GM12878 (cell line): ENCODE measurements at regions of chr6 and their contacts with region 1.

Region 1: GRCh38 chr6:32692019-32692418 is 25.6 kb upstream of the HLA-DQB1 start:
- DNase-seq: peak; percentile 50
- ATAC-seq: peak; percentile 77
- H3K4me3 ChIP-seq: no peak overlapping the region
- H3K27ac ChIP-seq: no peak overlapping the region
- H3K4me1 ChIP-seq: peaks cover 21% of the 10 kb centered on the region
- H3K27me3 ChIP-seq: no peaks in the 10 kb centered on the region; a peak in 1 of 4 replicates
- CTCF ChIP-seq: peak; percentile 68 to 84 (median 80)
- EP300 ChIP-seq: no peak
- POLR2A ChIP-seq: no peak
- RAD21 ChIP-seq: peak; percentile 97

Region 2: GRCh38 chr6:32424589-32425300 is 267.3 kb before region 1 on chr6:
- CTCF ChIA-PET with region 1: interaction called, 160 read pairs
- POLR2A ChIA-PET with region 1: no interaction called
- RAD21 ChIA-PET with region 1: interaction called, 119 read pairs
- SMC1A ChIA-PET with region 1: interaction called, 13 read pairs
- in situ Hi-C with region 1: loop called (anchors 5 kb)
- intact Hi-C with region 1: no loop called
- DNase-seq: no peak
- ATAC-seq: no peak
- H3K4me3 ChIP-seq: no peak overlapping the region
- H3K27ac ChIP-seq: no peak overlapping the region
- H3K4me1 ChIP-seq: no peaks in the 10 kb centered on the region
- H3K27me3 ChIP-seq: peaks cover 1 to 3% of the 10 kb centered on the region in 2 experiments; a peak in 2 of 4 replicates
- CTCF ChIP-seq: no peak
- EP300 ChIP-seq: no peak
- POLR2A ChIP-seq: no peak
- RAD21 ChIP-seq: no peak

Region 3: GRCh38 chr6:32439602-32440214 is 252.3 kb before region 1 on chr6 and contains the start of gene HLA-DRA:
- CTCF ChIA-PET with region 1: interaction called, 160 read pairs
- POLR2A ChIA-PET with region 1: interaction called, 27 read pairs
- RAD21 ChIA-PET with region 1: interaction called, 119 read pairs
- SMC1A ChIA-PET with region 1: interaction called, 154 read pairs
- in situ Hi-C with region 1: no loop called
- intact Hi-C with region 1: loop called (anchors 2 kb)
- DNase-seq: peak; percentile 99
- ATAC-seq: peak; percentile 71
- H3K4me3 ChIP-seq: peak within 1 kb of the TSS; percentile 99
- H3K27ac ChIP-seq: peak within 1 kb of the TSS; percentile 100
- H3K4me1 ChIP-seq: peaks cover 29% of the 10 kb centered on the region
- H3K27me3 ChIP-seq: no peaks in the 10 kb centered on the region
- CTCF ChIP-seq: no peak
- EP300 ChIP-seq: peak; percentile 66 to 68; a peak in 3 of 4 replicates
- POLR2A ChIP-seq: peak; percentile 95
- RAD21 ChIP-seq: no peak
- polyA plus RNA-seq, gene HLA-DRA: 4,131 to 6,024 TPM

Region 4: DNA sequence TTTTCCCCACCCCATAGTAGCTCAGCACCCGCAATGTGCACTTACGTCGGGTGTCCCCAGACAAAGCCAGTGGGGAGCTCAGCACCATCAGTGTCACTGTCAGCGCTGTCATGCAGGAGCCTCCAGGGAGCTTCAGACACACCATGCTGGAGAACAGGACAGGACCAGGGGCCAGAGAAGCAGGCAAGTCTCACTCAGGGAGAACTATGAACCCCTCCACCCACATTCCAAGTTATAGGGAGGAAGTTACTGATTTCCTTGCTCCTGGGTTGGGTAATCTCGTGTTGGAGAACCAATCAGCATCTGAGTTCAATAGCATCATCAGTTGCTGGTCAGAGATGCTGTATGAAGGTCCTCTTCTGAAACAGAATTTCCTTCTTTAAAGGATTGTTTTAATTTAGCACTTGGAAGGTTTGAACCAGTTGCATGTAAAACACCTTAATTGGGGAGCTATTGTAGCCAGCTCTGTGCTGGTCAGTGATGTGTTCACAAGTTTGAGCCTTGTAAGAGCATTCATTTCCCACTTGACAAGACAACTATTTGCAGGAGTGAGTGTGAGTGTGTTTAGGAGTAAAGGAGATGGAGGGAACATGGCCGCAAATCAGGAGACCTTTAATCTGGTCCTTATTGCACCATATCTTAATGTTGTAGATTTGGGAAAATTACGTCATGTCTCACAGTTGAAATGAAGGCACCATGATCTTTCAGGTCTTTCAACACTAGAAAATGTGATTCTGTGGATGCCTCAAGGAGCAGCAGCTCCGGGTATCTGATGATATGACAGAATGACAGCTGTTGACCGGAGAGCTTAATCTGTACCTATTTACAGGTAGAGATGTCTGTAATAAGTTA is 102.2 kb before region 1 on chr6 and contains the start of gene HLA-DRB1:
- CTCF ChIA-PET with region 1: interaction called, 5 read pairs
- POLR2A ChIA-PET with region 1: interaction called, 12 read pairs
- RAD21 ChIA-PET with region 1: interaction called, 4 read pairs
- SMC1A ChIA-PET with region 1: interaction called, 6 read pairs
- in situ Hi-C with region 1: no loop called
- intact Hi-C with region 1: no loop called
- DNase-seq: peak; percentile 91
- ATAC-seq: peak; percentile 89
- H3K4me3 ChIP-seq: peak within 1 kb of the TSS; percentile 72
- H3K27ac ChIP-seq: peak within 1 kb of the TSS; percentile 93
- H3K4me1 ChIP-seq: peaks cover 4% of the 10 kb centered on the region; the same call in 1 of the 2 replicates
- H3K27me3 ChIP-seq: no peaks in the 10 kb centered on the region
- CTCF ChIP-seq: no peak
- EP300 ChIP-seq: peak in 1 of 2 experiments; percentile 20; a peak in 1 of 4 replicates
- POLR2A ChIP-seq: peak; percentile 82
- RAD21 ChIP-seq: no peak
- polyA plus RNA-seq, gene HLA-DRB1: 312 to 364 TPM

Region 5: GRCh38 chr6:32637219-32637880 is 54.7 kb before region 1 on chr6 and contains the start of gene HLA-DQA1:
- CTCF ChIA-PET with region 1: interaction called, 6 read pairs
- POLR2A ChIA-PET with region 1: interaction called, 21 read pairs
- RAD21 ChIA-PET with region 1: interaction called, 20 read pairs
- SMC1A ChIA-PET with region 1: interaction called, 7 read pairs
- in situ Hi-C with region 1: no loop called
- intact Hi-C with region 1: no loop called
- DNase-seq: peak; percentile 91
- ATAC-seq: peak; percentile 74
- H3K4me3 ChIP-seq: peak within 1 kb of the TSS; percentile 70
- H3K27ac ChIP-seq: peak within 1 kb of the TSS; percentile 95
- H3K4me1 ChIP-seq: peaks cover 12% of the 10 kb centered on the region
- H3K27me3 ChIP-seq: no peaks in the 10 kb centered on the region
- CTCF ChIP-seq: no peak
- EP300 ChIP-seq: no peak
- POLR2A ChIP-seq: peak; percentile 95
- RAD21 ChIP-seq: no peak
- polyA plus RNA-seq, gene HLA-DQA1: 327 to 423 TPM

Region 6: GRCh38 chr6:32659856-32660595 is 32.0 kb before region 1 on chr6:
- CTCF ChIA-PET with region 1: interaction called, 3 read pairs
- POLR2A ChIA-PET with region 1: interaction called, 130 read pairs
- RAD21 ChIA-PET with region 1: interaction called, 13 read pairs
- SMC1A ChIA-PET with region 1: interaction called, 94 read pairs
- in situ Hi-C with region 1: no loop called
- intact Hi-C with region 1: no loop called
- DNase-seq: no peak
- ATAC-seq: peak; percentile 71
- H3K4me3 ChIP-seq: no peak overlapping the region
- H3K27ac ChIP-seq: peak overlapping the region; percentile 46; the same call in 1 of the 2 replicates
- H3K4me1 ChIP-seq: no peaks in the 10 kb centered on the region; the same call in 1 of the 2 replicates
- H3K27me3 ChIP-seq: no peaks in the 10 kb centered on the region
- CTCF ChIP-seq: no peak
- EP300 ChIP-seq: no peak
- POLR2A ChIP-seq: peak; percentile 35; the same call in 1 of the 2 replicates
- RAD21 ChIP-seq: no peak